Naive thymus-derived CD4-positive, alpha-beta T cell (primary cell): ENCODE measurements at regions of chr19 and their contacts with region 1.

Region 1: DNA sequence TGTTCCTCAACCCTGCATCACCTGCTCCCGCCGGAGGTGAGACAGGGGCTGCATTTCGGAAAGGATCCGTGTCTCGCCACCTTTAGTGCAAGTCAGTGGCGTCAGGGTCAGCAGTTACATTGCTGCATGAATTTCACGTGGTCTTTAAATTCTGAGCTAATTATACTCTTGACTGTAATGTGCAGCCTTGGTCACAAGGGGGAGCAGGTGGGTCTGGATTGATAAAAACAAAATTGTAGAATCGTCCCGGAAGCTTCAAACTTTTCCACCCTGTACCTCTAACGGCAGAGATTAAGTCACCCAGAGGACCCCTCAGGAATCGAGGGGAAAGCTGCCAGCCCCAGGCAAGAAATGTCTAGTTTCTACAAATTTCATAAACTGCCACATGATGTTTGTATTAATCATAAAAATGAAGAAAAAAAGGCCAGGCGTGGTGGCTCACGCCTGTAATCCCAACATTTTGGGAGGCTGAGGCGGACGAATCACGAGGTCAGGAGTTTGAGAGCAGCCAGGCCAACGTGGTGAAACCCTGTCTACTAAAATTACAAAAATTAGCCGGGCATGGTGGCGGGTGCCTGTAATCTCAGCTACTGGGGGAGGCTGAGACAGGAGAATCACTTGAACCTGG is 20.2 kb downstream of the BBC3 start:
- DNase-seq: peak; percentile 51 to 83 (median 76)
- ATAC-seq: peak; percentile 97
- H3K4me3 ChIP-seq: no peak overlapping the region
- H3K4me3 Mint-ChIP-seq: peak overlapping the region in 8 of 10 donors; percentile 5 to 53 (median 18)
- H3K27ac ChIP-seq: peak overlapping the region; percentile 49
- H3K27ac Mint-ChIP-seq: peak overlapping the region; percentile 55 to 88 (median 82)
- H3K4me1 ChIP-seq: peaks cover 8 to 10% of the 10 kb centered on the region in 2 donors
- H3K4me1 Mint-ChIP-seq: peaks cover 8 to 30% (median 14%) of the 10 kb centered on the region in 7 donors
- H3K27me3 ChIP-seq: no peaks in the 10 kb centered on the region
- H3K27me3 Mint-ChIP-seq: no peaks in the 10 kb centered on the region

Region 2: GRCh38 chr19:47143322-47144073 is 67.3 kb before region 1 on chr19:
- CTCF ChIA-PET with region 1: interaction called, 53 read pairs
- POLR2A ChIA-PET with region 1: interaction called, 14 read pairs
- intact Hi-C with region 1: no loop called
- DNase-seq: no peak
- ATAC-seq: no peak
- H3K4me3 ChIP-seq: no peak overlapping the region
- H3K4me3 Mint-ChIP-seq: peak overlapping the region in 3 of 10 donors; percentile 9 to 45 (median 32)
- H3K27ac ChIP-seq: no peak overlapping the region
- H3K27ac Mint-ChIP-seq: peak overlapping the region in 4 of 9 donors; percentile 11 to 73 (median 42)
- H3K4me1 ChIP-seq: peaks cover 21 to 38% of the 10 kb centered on the region in 2 donors
- H3K4me1 Mint-ChIP-seq: peaks cover 29 to 75% (median 57%) of the 10 kb centered on the region in 7 donors
- H3K27me3 ChIP-seq: no peaks in the 10 kb centered on the region
- H3K27me3 Mint-ChIP-seq: no peaks in the 10 kb centered on the region

Region 3: GRCh38 chr19:47157431-47158321 is 53.1 kb before region 1 on chr19:
- CTCF ChIA-PET with region 1: interaction called, 53 read pairs
- POLR2A ChIA-PET with region 1: interaction called, 23 read pairs
- intact Hi-C with region 1: loop called in 1 of 2 experiments (anchors 1 kb)
- DNase-seq: peak in 7 of 9 donors; percentile 38 to 58 (median 48)
- ATAC-seq: peak; percentile 45
- H3K4me3 ChIP-seq: peak overlapping the region; percentile 55
- H3K4me3 Mint-ChIP-seq: peak overlapping the region; percentile 79 to 98 (median 84)
- H3K27ac ChIP-seq: peak overlapping the region; percentile 66
- H3K27ac Mint-ChIP-seq: peak overlapping the region; percentile 82 to 98 (median 97)
- H3K4me1 ChIP-seq: peaks cover 57 to 72% of the 10 kb centered on the region in 2 donors
- H3K4me1 Mint-ChIP-seq: peaks cover 35 to 82% (median 66%) of the 10 kb centered on the region in 7 donors
- H3K27me3 ChIP-seq: no peaks in the 10 kb centered on the region
- H3K27me3 Mint-ChIP-seq: no peaks in the 10 kb centered on the region

Region 4: GRCh38 chr19:47190167-47190727 is 20.6 kb before region 1 on chr19:
- CTCF ChIA-PET with region 1: interaction called, 47 read pairs
- POLR2A ChIA-PET with region 1: interaction called, 19 read pairs
- intact Hi-C with region 1: loop called in 1 of 2 experiments (anchors 1 kb)
- DNase-seq: peak in 8 of 9 donors; percentile 52 to 77 (median 64)
- ATAC-seq: peak; percentile 53
- H3K4me3 ChIP-seq: no peak overlapping the region
- H3K4me3 Mint-ChIP-seq: peak overlapping the region; percentile 48 to 83 (median 72)
- H3K27ac ChIP-seq: peak overlapping the region; percentile 25
- H3K27ac Mint-ChIP-seq: peak overlapping the region; percentile 72 to 98 (median 95)
- H3K4me1 ChIP-seq: peaks cover 37 to 77% of the 10 kb centered on the region in 2 donors
- H3K4me1 Mint-ChIP-seq: peaks cover 41 to 81% (median 71%) of the 10 kb centered on the region in 7 donors
- H3K27me3 ChIP-seq: no peaks in the 10 kb centered on the region
- H3K27me3 Mint-ChIP-seq: no peaks in the 10 kb centered on the region

Region 5: GRCh38 chr19:47225746-47226425 is 15.1 kb after region 1 on chr19:
- CTCF ChIA-PET with region 1: interaction called, 14 read pairs
- POLR2A ChIA-PET with region 1: interaction called, 59 read pairs
- intact Hi-C with region 1: loop called (anchors 1 kb)
- DNase-seq: peak; percentile 72 to 94 (median 82)
- ATAC-seq: peak; percentile 76
- H3K4me3 ChIP-seq: peak overlapping the region; percentile 54
- H3K4me3 Mint-ChIP-seq: peak overlapping the region; percentile 31 to 84 (median 66)
- H3K27ac ChIP-seq: peak overlapping the region; percentile 81
- H3K27ac Mint-ChIP-seq: peak overlapping the region in 8 of 9 donors; percentile 26 to 96 (median 84)
- H3K4me1 ChIP-seq: peaks cover 28 to 31% of the 10 kb centered on the region in 2 donors
- H3K4me1 Mint-ChIP-seq: peaks cover 8 to 16% (median 11%) of the 10 kb centered on the region in 7 donors
- H3K27me3 ChIP-seq: no peaks in the 10 kb centered on the region
- H3K27me3 Mint-ChIP-seq: no peaks in the 10 kb centered on the region